ENCODE measurements at regions of chr2 and their contacts with region 1.

Region 1: GRCh38 chr2:217261452-217261851 is 401.6 kb upstream of the TNP1 start:
- DNase-seq: no peak
- H3K4me3 ChIP-seq: no peak overlapping the region
- H3K27ac ChIP-seq: no peak overlapping the region
- H3K4me1 ChIP-seq: peaks cover 0 to 4% (median under 1%) of the 10 kb centered on the region in 4 donors
- H3K27me3 ChIP-seq: no peaks in the 10 kb centered on the region
- CTCF ChIP-seq: no peak
- EP300 ChIP-seq: no peak
- POLR2A ChIP-seq: no peak

Region 2: GRCh38 chr2:217331523-217332139 is 70.2 kb after region 1 on chr2:
- in situ Hi-C with region 1: no loop called
- intact Hi-C with region 1: loop called (anchors 10 kb)
- DNase-seq: no peak
- H3K4me3 ChIP-seq: no peak overlapping the region
- H3K27ac ChIP-seq: peak overlapping the region; percentile 9 to 73 (median 53)
- H3K4me1 ChIP-seq: peaks cover 0 to 11% (median 2%) of the 10 kb centered on the region in 4 donors
- H3K27me3 ChIP-seq: no peaks in the 10 kb centered on the region
- CTCF ChIP-seq: no peak
- EP300 ChIP-seq: no peak
- POLR2A ChIP-seq: no peak

Region 3: GRCh38 chr2:217953531-217953932 is 692.1 kb after region 1 on chr2:
- in situ Hi-C with region 1: no loop called
- intact Hi-C with region 1: no loop called
- DNase-seq: no peak
- H3K4me3 ChIP-seq: no peak overlapping the region
- H3K27ac ChIP-seq: peak overlapping the region; percentile 78 to 95 (median 86)
- H3K4me1 ChIP-seq: peaks cover 39 to 65% (median 46%) of the 10 kb centered on the region in 4 donors
- H3K27me3 ChIP-seq: no peaks in the 10 kb centered on the region
- CTCF ChIP-seq: no peak
- EP300 ChIP-seq: no peak
- POLR2A ChIP-seq: no peak